Mammary epithelial cell (primary cell): ENCODE measurements at regions of chr22 and their contacts with region 1.

Region 1: DNA sequence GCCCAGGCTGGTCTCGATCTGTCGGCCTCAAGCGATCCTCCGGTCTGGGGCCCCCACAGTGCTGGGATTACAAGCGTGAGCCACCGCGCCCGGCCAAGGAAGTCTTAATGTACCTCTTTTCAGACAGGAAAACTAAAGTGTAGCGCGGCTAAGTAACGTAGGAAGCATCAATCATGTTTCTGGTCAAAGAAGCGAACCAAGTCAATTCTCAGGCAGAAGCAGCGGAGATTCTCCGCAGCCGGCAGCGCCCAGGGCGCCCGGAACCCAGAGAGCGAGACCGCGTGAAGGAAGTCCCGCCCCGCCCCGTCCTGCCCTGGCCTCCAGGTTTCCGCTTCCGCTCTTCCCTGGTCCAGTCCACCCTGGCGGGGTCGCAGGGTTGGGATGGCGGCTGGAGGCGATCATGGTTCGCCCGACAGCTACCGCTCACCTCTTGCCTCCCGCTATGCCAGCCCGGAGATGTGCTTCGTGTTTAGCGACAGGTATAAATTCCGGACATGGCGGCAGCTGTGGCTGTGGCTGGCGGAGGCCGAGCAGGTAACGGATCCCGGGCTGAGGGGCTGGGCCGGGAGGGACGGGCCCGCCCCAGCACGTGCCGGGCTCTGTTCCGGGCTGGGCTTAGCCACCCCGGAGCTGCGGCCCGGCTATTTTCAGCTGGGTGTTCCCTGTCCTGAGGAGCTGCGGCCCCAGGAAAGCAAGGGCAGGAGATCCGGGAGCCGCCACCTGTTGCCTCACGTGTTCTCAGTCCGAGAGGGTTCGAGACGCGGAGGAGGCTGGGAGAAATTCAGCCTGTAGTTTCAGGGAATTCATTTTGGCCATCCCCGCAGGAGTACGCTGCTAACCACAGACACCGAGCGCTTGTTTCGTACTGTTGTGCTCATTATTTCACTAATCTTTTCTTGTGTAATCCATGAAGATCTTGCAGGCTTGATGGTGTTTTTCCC is at the start of gene ADSL:
- DNase-seq: peak; percentile 88
- H3K4me3 ChIP-seq: peak within 1 kb of the TSS; percentile 77 to 84 (median 83)
- H3K27ac ChIP-seq: peak within 1 kb of the TSS; percentile 59
- H3K4me1 ChIP-seq: peaks cover 13% of the 10 kb centered on the region
- H3K27me3 ChIP-seq: no peaks in the 10 kb centered on the region
- CTCF ChIP-seq: peak in 1 of 2 donors; percentile 14
- total RNA-seq, gene ADSL: 67.5 to 78.0 TPM

Region 2: GRCh38 chr22:40044102-40044869 is 302.2 kb before region 1 on chr22:
- CTCF ChIA-PET with region 1: no interaction called
- dilution Hi-C with region 1: no loop called
- in situ Hi-C with region 1: loop called in 1 of 2 experiments (anchors 10 kb)
- intact Hi-C with region 1: loop called (anchors 1 kb)
- DNase-seq: peak; percentile 99
- H3K4me3 ChIP-seq: peak overlapping the region; percentile 78 to 97 (median 90)
- H3K27ac ChIP-seq: peak overlapping the region; percentile 80
- H3K4me1 ChIP-seq: peaks cover 44% of the 10 kb centered on the region
- H3K27me3 ChIP-seq: no peaks in the 10 kb centered on the region
- CTCF ChIP-seq: no peak

Region 3: GRCh38 chr22:40156001-40156516 is 190.4 kb before region 1 on chr22:
- CTCF ChIA-PET with region 1: no interaction called
- dilution Hi-C with region 1: no loop called
- in situ Hi-C with region 1: no loop called
- intact Hi-C with region 1: loop called (anchors 1 kb)
- DNase-seq: peak; percentile 82
- H3K4me3 ChIP-seq: no peak overlapping the region
- H3K27ac ChIP-seq: no peak overlapping the region
- H3K4me1 ChIP-seq: peaks cover 3% of the 10 kb centered on the region
- H3K27me3 ChIP-seq: no peaks in the 10 kb centered on the region
- CTCF ChIP-seq: peak in 1 of 2 donors; percentile 42

Region 4: DNA sequence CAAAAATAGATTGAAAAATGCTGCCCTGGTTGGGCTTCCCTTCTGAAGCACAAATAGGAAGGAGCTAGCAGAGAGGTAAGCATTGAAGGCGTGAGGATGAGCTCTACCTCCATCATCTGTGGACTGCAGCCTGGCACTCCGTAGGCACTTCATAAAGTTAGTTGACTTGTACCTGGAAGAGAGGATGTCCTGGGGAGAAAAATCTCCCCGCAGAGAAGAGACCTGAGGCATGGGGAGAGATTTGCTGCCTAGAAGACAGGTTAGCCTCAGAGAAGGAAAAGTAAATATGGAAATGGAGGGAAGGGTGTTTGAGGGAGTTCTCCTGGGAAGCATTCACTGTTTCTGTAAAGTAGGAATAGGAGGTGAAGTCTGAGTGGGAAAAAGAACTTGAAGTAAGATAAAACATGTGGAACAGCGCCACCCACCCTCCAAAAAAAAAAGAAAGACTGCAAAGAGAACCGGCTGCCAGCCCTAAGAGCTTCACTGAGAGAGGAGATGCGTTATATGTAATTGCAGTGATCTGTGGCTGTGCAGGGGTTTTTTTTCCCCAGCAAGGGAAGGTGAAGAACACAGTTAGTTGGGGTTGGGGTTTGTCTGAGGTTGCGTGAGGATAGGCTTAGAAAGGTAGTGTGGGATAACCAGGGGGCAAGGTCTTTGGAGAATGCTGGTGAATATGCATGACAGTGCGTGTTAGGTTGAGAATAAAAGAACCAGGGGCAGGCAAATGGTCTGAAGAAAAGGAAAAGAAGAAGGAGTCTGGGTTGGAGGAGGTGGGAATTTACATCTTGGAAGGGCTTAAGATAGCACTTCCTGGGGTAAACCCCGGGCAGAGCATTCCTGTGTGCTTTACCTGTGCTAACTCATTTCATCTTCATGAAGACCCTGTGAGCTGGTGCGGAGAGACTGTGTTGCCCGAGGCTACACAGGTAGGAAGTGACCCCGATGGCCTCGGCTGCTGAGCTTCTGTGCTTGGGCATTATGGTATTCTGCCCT is 152.7 kb before region 1 on chr22:
- CTCF ChIA-PET with region 1: no interaction called
- dilution Hi-C with region 1: no loop called
- in situ Hi-C with region 1: no loop called
- intact Hi-C with region 1: loop called (anchors 5 kb)
- DNase-seq: no peak
- H3K4me3 ChIP-seq: no peak overlapping the region
- H3K27ac ChIP-seq: no peak overlapping the region
- H3K4me1 ChIP-seq: peaks cover 35% of the 10 kb centered on the region
- H3K27me3 ChIP-seq: no peaks in the 10 kb centered on the region
- CTCF ChIP-seq: peak; percentile 25 to 52

Region 5: GRCh38 chr22:40410317-40410716 is 63.9 kb after region 1 on chr22:
- CTCF ChIA-PET with region 1: no interaction called
- dilution Hi-C with region 1: no loop called
- in situ Hi-C with region 1: no loop called
- intact Hi-C with region 1: no loop called
- DNase-seq: peak; percentile 77
- H3K4me3 ChIP-seq: no peak overlapping the region
- H3K27ac ChIP-seq: no peak overlapping the region
- H3K4me1 ChIP-seq: peaks cover 42% of the 10 kb centered on the region
- H3K27me3 ChIP-seq: no peaks in the 10 kb centered on the region
- CTCF ChIP-seq: no peak